H1 (cell line): ENCODE measurements at regions of chr3 and their contacts with region 1.

Region 1: DNA sequence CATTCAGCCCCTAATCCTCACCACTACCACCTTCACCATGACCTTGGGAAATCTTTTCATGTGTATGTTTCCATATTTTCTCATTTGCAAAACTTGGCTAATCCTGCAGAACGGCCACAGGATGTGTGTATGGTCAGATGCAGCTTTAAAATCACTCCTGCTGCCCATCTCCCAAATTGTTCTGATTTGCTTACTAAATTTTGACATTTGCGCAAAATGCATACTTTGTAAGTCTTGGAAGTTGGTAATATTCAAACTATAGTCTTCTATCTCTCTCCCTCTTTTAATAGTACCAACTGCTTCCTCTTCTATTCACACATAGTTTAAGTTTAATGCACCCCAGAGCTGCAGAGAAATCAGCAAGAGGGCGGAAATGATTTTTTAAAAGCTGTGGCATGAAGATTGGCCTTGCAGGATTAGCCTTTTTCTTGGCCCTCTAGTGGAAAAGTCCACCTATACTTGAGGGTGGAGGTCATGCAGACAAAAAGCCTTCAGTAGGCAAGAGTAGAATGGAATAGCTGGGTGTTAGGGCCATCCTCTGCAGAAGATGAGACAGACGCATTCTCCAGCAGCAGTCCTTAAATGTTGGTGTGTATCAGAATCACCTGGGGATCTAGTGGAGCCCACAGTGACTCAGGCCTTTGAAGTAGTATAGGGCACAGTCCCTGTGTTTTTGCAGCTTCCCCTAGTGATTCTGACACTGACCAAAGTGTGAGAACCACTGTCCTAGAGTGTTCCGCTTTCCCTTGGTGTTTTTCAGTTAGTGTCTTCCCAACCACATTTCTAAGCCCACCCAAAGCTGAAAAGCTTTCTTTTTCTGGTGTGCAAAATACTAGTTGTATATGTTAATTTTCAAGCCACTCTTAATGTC is 181.7 kb downstream of the CHST2 start:
- DNase-seq: no peak
- H3K4me3 ChIP-seq: no peak overlapping the region
- H3K27ac ChIP-seq: no peak overlapping the region
- H3K4me1 ChIP-seq: peaks cover 0 to 4% (median 0%) of the 10 kb centered on the region in 4 experiments; a peak in 1 of 7 replicates
- H3K27me3 ChIP-seq: no peaks in the 10 kb centered on the region
- CTCF ChIP-seq: no peak
- EP300 ChIP-seq: no peak
- POLR2A ChIP-seq: no peak
- RAD21 ChIP-seq: no peak

Region 2: GRCh38 chr3:143287403-143287802 is 13.9 kb before region 1 on chr3:
- CTCF ChIA-PET with region 1: interaction called, 20 read pairs
- POLR2A ChIA-PET with region 1: no interaction called
- DNase-seq: no peak
- H3K4me3 ChIP-seq: no peak overlapping the region
- H3K27ac ChIP-seq: no peak overlapping the region
- H3K4me1 ChIP-seq: no peaks in the 10 kb centered on the region
- H3K27me3 ChIP-seq: no peaks in the 10 kb centered on the region
- CTCF ChIP-seq: no peak
- EP300 ChIP-seq: no peak
- POLR2A ChIP-seq: no peak
- RAD21 ChIP-seq: no peak